ENCODE measurements at regions of chr16 and their contacts with region 1.

Region 1: GRCh38 chr16:10868596-10869469 is 8.2 kb upstream of the CIITA start:
- DNase-seq: peak; percentile 58
- CTCF ChIP-seq: no peak

Region 2: DNA sequence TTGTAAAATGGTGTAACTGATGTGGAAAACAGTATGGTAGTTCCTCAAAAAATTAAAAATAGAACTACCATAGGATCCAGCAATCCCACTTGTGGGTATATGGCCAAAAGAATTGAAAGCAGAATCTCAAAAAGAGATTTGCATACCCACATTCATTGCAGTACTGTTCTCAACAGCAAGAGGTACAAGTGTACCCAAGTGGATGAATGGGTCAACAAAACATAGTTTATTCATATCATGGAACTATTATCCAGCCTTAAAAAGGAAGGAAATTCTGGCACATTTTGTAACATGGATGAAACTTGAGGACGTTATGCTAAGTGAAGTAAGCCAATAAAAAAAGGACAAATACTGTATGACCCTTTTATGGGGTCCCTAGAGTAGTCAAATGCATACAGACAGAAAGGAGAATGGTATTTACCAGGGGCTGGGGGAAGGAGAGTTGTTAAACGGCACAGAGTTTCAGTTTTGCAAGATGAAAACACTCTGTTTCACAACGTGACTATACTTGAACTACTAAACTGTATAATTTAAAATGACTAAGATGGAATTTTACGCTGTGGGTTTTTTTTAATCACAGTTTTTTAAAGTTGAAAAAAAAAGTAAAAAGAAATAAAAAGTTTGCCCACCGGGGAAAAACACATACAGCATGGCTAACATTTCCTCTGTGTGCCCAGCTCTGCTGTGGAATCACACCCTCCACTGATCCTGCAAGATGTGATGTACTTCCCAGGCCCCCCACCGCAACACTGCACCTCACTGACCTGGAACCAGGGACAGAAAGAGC is 56.3 kb before region 1 on chr16:
- in situ Hi-C with region 1: loop called (anchors 10 kb)
- DNase-seq: peak; percentile 60
- CTCF ChIP-seq: no peak